ENCODE measurements at regions of chr10 and their contacts with region 1.

Region 1: GRCh38 chr10:102132563-102133372 is at the start of gene PPRC1:
- DNase-seq: peak; percentile 93 to 97
- H3K4me3 ChIP-seq: peak within 1 kb of the TSS; percentile 75 to 95 (median 86)
- H3K27ac ChIP-seq: peak within 1 kb of the TSS; percentile 92
- H3K4me1 ChIP-seq: peaks cover 0 to 12% (median 3%) of the 10 kb centered on the region in 4 experiments; a peak in 4 of 7 replicates
- H3K27me3 ChIP-seq: no peaks in the 10 kb centered on the region
- CTCF ChIP-seq: peak; percentile 72 to 84 (median 76)
- EP300 ChIP-seq: no peak
- POLR2A ChIP-seq: peak; percentile 85 to 94
- RAD21 ChIP-seq: peak; percentile 53 to 62
- total RNA-seq, gene PPRC1: 86.2 and 88.4 TPM in 2 replicates

Region 2: DNA sequence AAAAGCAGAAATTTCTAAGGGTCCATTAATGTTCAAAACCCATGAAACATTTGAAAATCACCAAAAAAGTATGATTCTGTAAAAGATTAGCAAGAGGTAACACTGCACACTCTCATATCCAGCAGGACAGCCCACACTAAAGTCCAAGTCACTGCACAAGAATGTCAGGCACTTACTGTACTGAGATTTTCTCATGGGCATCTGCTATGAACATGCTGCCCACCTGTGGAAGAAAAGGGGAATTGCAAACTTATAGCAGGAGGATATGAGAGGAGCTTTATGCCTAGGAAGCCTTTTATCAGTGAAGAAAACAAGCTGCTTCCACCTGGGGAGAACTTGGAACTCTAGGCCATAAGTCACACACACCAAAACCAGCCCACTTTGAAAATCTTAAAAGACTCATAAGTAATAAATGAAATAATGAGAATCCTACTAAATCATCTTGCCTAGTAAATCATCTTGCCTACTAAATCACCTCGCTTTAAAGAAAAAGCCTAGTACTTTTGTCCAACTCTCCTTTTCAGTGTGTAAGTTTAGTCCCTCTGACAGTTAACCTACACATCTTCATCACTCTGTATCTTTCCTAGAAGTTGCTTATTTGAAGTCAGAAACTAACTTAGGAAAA is 122.9 kb before region 1 on chr10:
- CTCF ChIA-PET with region 1: no interaction called
- POLR2A ChIA-PET with region 1: no interaction called
- DNase-seq: peak in 1 of 2 experiments; percentile 17
- H3K4me3 ChIP-seq: no peak overlapping the region
- H3K27ac ChIP-seq: no peak overlapping the region
- H3K4me1 ChIP-seq: peaks cover 0 to 5% (median 2%) of the 10 kb centered on the region in 4 experiments; a peak in 3 of 7 replicates
- H3K27me3 ChIP-seq: no peaks in the 10 kb centered on the region
- CTCF ChIP-seq: peak in 2 of 3 experiments; percentile 95 to 99; a peak in 3 of 4 replicates
- EP300 ChIP-seq: no peak
- POLR2A ChIP-seq: no peak
- RAD21 ChIP-seq: peak; percentile 99

Region 3: DNA sequence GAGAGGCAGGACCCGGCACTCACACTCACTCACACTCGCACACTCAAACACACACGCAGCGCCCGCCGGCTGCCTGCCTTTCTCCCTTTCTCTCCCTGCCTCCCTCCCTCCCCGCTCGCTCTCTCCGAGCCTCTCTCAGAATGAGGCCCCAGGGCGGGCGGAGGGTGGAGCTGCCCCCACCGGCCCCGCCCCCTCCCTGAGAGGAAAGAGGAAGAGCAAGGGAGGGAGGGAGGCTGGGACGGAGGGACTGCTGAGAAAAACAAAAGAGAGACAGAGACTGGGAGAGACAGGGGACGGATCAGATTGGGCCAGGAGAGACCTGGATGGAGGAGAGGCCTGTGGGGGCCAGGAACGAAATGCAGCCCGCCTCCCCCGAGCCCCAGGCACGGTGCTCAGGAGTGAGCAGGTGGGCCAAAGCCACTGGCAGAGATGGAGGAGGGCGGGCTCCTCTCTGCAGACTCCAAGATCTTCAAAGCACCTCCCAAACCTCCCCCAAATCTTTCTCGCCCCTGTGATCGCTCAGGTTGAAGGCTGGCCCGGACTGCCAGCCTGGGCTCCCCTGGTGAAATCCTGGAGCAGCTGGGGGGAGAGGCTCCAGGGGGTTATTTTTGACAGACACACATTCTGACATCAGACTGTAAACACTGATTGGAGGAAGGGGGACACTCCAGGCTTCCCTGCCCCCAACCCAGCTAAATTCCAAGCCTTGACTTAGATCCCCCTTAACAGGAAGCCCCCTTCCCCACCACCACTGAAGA is 17.7 kb before region 1 on chr10:
- CTCF ChIA-PET with region 1: interaction called, 6 read pairs
- POLR2A ChIA-PET with region 1: interaction called, 23 read pairs
- DNase-seq: peak in 1 of 2 experiments; percentile 85
- H3K4me3 ChIP-seq: peak overlapping the region; percentile 46 to 96 (median 69)
- H3K27ac ChIP-seq: peak overlapping the region; percentile 59; the same call in 1 of the 2 replicates
- H3K4me1 ChIP-seq: peaks cover 22 to 48% (median 31%) of the 10 kb centered on the region in 4 experiments
- H3K27me3 ChIP-seq: no peaks in the 10 kb centered on the region
- CTCF ChIP-seq: no peak
- EP300 ChIP-seq: no peak
- POLR2A ChIP-seq: peak; percentile 78 to 88
- RAD21 ChIP-seq: no peak

Region 4: DNA sequence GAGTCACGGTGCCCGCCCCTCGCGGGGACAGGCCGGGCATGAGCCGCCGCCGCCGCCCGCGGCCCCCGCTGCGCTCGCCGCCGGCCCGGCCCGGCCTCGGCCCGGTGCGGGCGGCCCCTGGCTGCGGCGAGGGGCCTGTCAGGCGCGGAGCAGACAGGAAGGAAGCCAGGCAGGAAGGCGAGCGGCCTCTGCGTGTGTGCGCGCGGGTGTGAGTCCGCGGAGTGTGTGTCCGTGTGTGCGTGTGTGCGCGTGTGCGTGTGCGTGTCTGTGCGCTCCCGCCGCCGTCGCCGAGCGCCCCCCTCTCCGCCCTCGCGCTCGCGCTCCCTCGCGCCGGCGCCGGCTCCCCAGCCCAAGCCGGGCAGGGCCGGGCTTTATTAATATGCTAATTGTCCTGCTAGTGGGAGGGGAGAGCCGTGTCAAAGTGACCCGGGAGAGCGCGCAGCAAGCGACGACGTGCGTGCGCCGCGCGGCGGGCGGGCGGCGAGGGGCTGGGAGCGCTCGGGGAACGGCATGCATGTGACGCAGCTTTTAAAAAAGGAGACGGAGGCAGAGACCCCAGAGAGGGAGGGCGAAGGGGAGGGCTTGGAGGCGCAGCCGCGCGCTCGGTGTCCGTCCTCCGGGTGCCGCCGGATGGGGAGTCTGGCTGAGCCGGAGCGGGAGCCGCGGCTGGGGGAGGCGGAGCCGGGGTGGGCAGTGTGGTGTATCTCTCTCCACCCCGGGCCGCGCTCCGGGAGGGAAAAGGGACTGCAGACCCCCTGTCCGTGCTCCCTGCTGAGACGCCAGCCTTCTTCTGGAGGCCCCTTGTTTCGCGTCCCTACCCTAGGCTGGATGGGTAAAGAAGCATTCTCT is 12.4 kb before region 1 on chr10 and contains the start of gene LDB1:
- CTCF ChIA-PET with region 1: interaction called, 28 read pairs
- POLR2A ChIA-PET with region 1: interaction called, 23 read pairs
- DNase-seq: peak in 1 of 2 experiments; percentile 85
- H3K4me3 ChIP-seq: peak within 1 kb of the TSS; percentile 80 to 93 (median 84)
- H3K27ac ChIP-seq: peak within 1 kb of the TSS; percentile 88
- H3K4me1 ChIP-seq: peaks cover 22 to 49% (median 31%) of the 10 kb centered on the region in 4 experiments
- H3K27me3 ChIP-seq: no peaks in the 10 kb centered on the region
- CTCF ChIP-seq: no peak
- EP300 ChIP-seq: peak in 1 of 2 experiments; percentile 31; a peak in 1 of 3 replicates
- POLR2A ChIP-seq: peak in 1 of 2 experiments; percentile 84; a peak in 2 of 3 replicates
- RAD21 ChIP-seq: no peak
- total RNA-seq, gene LDB1: 88.4 and 88.8 TPM in 2 replicates

Region 5: DNA sequence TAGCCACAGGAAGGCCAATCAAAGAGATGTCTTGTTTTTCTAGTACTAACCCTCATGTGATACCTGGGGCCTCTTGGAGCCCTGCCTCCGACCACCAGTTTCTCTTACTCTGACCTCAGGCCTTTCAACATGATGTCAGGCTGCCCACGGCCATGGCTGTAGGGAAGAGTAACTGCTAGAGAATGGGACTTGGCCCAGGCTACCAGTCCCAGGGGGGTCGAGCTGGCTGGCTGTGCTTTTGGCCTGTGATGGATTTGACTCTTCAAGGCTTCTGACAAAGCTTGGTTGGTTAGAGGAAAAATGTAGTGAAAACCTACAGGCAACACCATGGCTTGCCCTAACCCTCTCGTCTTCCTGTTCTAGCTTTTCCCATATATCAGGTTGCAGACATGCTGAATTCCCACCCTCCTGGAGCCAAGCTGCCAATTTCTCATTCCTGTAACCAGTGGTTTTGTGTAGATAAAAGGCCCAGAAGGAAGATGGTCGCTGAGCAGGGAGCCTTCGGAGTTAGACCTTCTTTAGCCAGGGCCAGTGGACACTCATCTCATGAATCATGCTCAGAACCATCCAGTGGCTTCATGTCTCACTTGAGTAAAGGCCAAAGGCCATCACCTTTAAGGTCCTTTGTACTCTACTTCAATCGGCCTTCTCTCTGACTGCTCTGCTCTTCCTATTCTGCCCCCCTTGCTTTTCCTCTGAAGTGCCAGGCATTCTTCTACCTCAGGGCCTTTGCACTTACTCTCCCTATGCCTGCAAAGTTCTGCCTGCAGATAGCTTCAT is 390.7 kb after region 1 on chr10:
- CTCF ChIA-PET with region 1: no interaction called
- POLR2A ChIA-PET with region 1: no interaction called
- DNase-seq: no peak
- H3K4me3 ChIP-seq: no peak overlapping the region
- H3K27ac ChIP-seq: no peak overlapping the region
- H3K4me1 ChIP-seq: no peaks in the 10 kb centered on the region
- H3K27me3 ChIP-seq: no peaks in the 10 kb centered on the region
- CTCF ChIP-seq: no peak
- EP300 ChIP-seq: no peak
- POLR2A ChIP-seq: no peak
- RAD21 ChIP-seq: no peak